Ovary (tissue), 10 donors: ENCODE measurements at regions of chr3 and their contacts with region 1.

Region 1: DNA sequence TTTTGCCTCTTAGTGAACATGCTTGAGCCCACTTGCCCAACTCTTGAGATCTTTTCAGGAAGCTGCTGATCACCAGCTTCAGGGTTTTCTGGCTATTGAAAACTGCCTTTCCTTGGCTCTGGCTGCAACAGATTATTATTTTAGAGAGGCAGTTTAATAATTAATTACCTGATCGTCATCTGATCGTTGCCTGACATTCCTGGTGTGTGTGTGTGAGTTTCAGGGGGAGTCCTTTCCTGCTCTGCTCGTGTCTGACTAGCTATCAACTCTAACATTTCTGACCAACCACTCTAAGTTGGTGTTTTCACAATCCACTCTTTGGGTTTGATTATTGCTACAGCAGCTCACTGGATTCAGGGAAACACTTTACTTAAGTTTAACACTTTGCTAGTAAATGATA is 84.3 kb upstream of the SPATA16 start:
- DNase-seq: no peak
- H3K4me3 ChIP-seq: no peak overlapping the region
- H3K27ac ChIP-seq: no peak overlapping the region
- H3K4me1 ChIP-seq: no peaks in the 10 kb centered on the region
- H3K27me3 ChIP-seq: no peaks in the 10 kb centered on the region
- CTCF ChIP-seq: no peak
- EP300 ChIP-seq: no peak
- POLR2A ChIP-seq: no peak

Region 2: DNA sequence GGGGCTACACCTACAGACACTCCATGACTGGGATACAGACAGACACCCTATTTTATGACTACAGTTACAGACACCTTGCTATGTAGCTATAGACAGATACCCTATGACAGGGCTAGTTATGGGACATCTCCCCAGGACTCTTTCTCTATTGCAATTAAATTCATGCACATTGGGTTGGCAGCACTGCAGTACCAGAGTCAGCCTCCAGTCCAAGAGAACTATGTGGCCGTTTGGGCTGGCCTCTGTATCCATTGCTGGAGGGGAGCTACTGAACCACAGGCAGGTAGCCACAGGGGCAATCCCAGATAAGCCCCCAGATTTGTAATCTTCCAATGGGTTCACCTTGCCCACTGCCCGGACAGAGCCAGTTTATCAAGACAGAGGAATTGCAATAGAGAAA is 24.1 kb after region 1 on chr3:
- intact Hi-C with region 1: loop called in 1 of 4 experiments (anchors 2 kb)
- DNase-seq: no peak
- H3K4me3 ChIP-seq: no peak overlapping the region
- H3K27ac ChIP-seq: no peak overlapping the region
- H3K4me1 ChIP-seq: no peaks in the 10 kb centered on the region
- H3K27me3 ChIP-seq: no peaks in the 10 kb centered on the region
- CTCF ChIP-seq: no peak
- EP300 ChIP-seq: no peak
- POLR2A ChIP-seq: no peak